Left colon (tissue), 2 donors: ENCODE measurements at regions of chr21 and their contacts with region 1.

Region 1: DNA sequence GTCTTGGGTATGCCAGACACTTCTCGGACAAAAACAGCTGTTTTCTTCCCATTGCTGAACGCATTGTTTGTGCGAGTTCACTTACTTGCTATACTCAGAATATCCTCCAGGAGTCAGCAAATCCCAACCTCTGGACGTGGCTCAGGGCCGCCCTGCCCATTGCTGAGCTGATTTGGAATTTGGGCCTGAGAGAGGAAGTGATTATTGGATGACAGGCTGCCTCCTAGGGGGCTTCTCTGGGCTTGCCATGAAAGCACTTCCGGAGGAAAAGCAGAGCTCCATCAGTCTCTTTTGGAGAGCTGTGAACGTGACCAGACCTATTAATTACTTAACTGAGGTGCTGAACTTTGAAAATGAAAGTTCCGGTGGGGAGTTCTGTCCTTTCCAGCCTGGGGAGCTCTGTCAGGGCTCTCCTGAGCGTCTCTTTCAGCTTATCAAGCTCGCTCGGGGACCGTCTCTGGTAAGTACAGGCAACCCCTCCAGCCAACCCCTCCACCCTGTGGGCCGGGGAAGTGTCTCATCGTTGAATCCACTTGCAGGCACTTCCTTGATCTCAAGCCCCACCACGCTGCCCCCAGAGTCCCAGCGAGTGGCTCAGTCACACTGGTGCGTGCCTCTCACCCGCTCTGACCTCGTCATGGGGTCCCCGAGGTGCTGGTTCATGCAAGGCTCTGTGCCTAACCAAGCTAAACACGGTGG is 76.9 kb downstream of the CLIC6 start:
- DNase-seq: peak; percentile 48 to 60
- ATAC-seq: peak; percentile 95

Region 2: GRCh38 chr21:34888569-34889319 is 143.0 kb after region 1 on chr21:
- intact Hi-C with region 1: loop called in 1 of 2 experiments (anchors 10 kb)
- DNase-seq: peak; percentile 94
- ATAC-seq: peak; percentile 61

Region 3: GRCh38 chr21:35400233-35400957 is 654.7 kb after region 1 on chr21:
- intact Hi-C with region 1: loop called in 1 of 2 experiments (anchors 10 kb)
- DNase-seq: peak in 1 of 2 donors; percentile 7
- ATAC-seq: peak; percentile 99

Region 4: DNA sequence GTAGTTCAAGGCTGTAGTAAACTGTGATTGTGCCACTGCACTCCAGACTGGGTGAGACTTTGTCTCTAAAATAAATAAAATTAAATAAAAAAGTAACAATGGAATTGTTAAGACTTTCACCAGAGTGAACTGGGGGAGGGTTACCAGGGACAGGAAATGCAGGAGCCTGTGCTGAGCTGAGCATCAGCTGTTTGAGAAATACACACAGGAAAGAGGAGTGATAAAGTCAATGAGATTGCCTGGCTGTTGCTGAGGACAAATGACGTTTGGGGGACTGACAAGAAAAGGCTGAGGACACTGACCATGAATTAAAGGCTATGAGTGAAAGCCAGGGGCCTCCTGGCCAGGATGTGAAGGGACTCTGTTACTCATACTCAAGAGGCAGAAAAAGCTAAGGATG is 1088.3 kb after region 1 on chr21:
- intact Hi-C with region 1: loop called in 1 of 2 experiments (anchors 10 kb)
- DNase-seq: no peak
- ATAC-seq: no peak